IMR-90 (cell line): ENCODE measurements at regions of chr7 and their contacts with region 1.

Region 1: GRCh38 chr7:45136106-45137060 is 21.2 kb upstream of the RAMP3 start:
- DNase-seq: peak; percentile 74
- ATAC-seq: peak; percentile 89
- H3K4me3 ChIP-seq: no peak overlapping the region
- H3K27ac ChIP-seq: no peak overlapping the region
- H3K4me1 ChIP-seq: no peaks in the 10 kb centered on the region
- H3K27me3 ChIP-seq: peaks cover 25% of the 10 kb centered on the region
- CTCF ChIP-seq: peak; percentile 96
- POLR2A ChIP-seq: 0 out of 2 replicates have a peak, but pooled peaks have one; percentile 18
- RAD21 ChIP-seq: peak; percentile 95

Region 2: DNA sequence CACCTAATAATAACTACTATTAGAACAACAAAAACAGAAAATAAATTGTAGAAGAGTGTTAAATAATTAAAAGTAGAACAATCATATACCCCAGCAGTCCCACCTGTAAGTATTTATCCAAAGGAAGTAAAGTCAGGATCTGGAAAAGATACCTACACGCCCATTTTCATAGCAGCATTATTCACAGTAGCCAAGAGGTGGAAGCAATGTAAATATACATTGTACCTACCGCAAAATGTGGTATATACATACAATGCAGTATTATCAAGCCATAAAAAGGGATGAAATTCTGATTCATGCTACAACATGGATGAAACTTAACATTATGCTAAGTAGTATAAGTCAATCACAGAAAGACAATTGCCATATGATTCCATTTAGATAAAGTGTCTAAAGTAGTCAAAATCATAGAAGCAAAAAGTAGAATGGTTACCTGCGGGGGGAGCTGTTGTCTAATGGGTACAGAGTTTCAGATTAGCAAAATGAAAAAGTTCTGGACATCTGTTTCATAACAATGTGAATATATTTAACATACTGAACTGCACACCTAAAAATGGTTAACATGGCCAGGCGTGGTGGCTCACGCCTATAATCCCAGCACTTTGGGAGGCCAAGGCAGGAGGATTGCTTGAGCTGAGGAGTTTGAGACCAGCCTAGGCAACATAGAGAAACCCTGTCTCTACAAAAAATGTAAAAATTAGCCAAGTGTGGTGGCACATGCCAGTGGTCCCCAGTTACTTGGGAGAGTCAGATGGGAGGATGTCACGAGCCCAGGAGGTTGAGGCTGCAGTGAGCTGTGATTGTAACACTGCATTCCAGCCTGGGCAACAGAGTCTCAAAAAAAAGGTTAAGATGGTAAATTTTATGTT is 548.3 kb before region 1 on chr7:
- CTCF ChIA-PET with region 1: no interaction called
- POLR2A ChIA-PET with region 1: no interaction called
- dilution Hi-C with region 1: no loop called
- in situ Hi-C with region 1: loop called (anchors 10 kb)
- intact Hi-C with region 1: loop called (anchors 1 kb)
- DNase-seq: peak; percentile 66
- ATAC-seq: peak; percentile 92
- H3K4me3 ChIP-seq: no peak overlapping the region
- H3K27ac ChIP-seq: no peak overlapping the region
- H3K4me1 ChIP-seq: peaks cover 2% of the 10 kb centered on the region; the same call in 1 of the 2 replicates
- H3K27me3 ChIP-seq: no peaks in the 10 kb centered on the region
- CTCF ChIP-seq: peak; percentile 84
- POLR2A ChIP-seq: no peak
- RAD21 ChIP-seq: peak; percentile 91

Region 3: DNA sequence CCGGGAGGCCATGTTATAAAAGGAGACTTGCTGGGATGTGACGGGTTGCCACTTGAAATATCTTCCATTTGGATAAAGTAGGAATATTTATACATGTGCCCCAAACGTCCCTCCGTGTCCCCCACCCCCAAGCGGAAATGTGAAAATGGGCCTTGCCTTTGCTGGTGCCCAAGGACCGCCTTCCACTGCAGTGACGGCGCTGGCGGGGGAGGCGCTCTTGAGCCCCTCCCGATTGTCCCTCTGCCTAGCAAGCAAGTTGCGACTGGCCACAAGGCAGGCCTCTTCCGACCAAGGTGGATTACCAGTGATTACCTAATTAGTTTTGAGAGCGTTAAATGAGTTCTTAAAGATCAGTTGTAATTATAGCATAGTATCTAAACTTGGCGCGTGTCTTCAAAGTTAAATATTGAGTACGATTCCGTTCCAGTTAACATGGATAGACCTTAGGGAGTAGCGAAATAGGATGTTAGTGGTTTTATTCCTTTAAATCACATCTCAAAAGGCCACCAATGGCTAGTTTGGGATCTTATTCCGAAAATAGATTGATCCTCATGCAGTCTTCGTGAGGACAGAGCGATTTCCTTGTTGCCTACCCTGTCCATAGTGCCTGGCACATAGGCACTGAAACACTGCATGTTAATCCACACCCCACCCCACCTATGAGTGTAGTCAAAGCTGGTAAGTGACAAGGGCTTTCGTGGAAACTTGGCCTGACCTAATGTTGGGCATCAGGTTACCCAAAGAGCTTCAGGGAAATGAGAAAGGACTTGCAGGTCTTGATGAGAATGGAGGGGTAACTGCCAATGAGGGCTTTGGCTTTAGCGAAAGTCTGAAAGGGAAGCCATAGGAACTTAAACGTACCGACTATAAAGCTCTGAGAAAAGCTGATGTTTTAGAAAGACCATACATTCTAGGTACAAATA is 338.8 kb before region 1 on chr7:
- CTCF ChIA-PET with region 1: no interaction called
- POLR2A ChIA-PET with region 1: no interaction called
- dilution Hi-C with region 1: no loop called
- in situ Hi-C with region 1: no loop called
- intact Hi-C with region 1: loop called (anchors 5 kb)
- DNase-seq: peak; percentile 84
- ATAC-seq: peak; percentile 61
- H3K4me3 ChIP-seq: peak overlapping the region; percentile 91
- H3K27ac ChIP-seq: peak overlapping the region; percentile 97
- H3K4me1 ChIP-seq: peaks cover 2% of the 10 kb centered on the region; the same call in 1 of the 2 replicates
- H3K27me3 ChIP-seq: no peaks in the 10 kb centered on the region
- CTCF ChIP-seq: peak; percentile 42
- POLR2A ChIP-seq: peak; percentile 77
- RAD21 ChIP-seq: peak; percentile 38

Region 4: GRCh38 chr7:44962483-44963251 is 173.7 kb before region 1 on chr7:
- CTCF ChIA-PET with region 1: no interaction called
- POLR2A ChIA-PET with region 1: no interaction called
- dilution Hi-C with region 1: no loop called
- in situ Hi-C with region 1: loop called (anchors 10 kb)
- intact Hi-C with region 1: loop called (anchors 1 kb)
- DNase-seq: no peak
- ATAC-seq: peak; percentile 85
- H3K4me3 ChIP-seq: peak overlapping the region; percentile 34
- H3K27ac ChIP-seq: no peak overlapping the region
- H3K4me1 ChIP-seq: peaks cover 5% of the 10 kb centered on the region; the same call in 1 of the 2 replicates
- H3K27me3 ChIP-seq: peaks cover 28% of the 10 kb centered on the region
- CTCF ChIP-seq: no peak
- POLR2A ChIP-seq: no peak
- RAD21 ChIP-seq: no peak; the same call in 1 of the 2 replicates

Region 5: GRCh38 chr7:44973610-44974401 is 162.6 kb before region 1 on chr7:
- CTCF ChIA-PET with region 1: interaction called, 31 read pairs
- POLR2A ChIA-PET with region 1: no interaction called
- dilution Hi-C with region 1: no loop called
- in situ Hi-C with region 1: loop called (anchors 10 kb)
- intact Hi-C with region 1: loop called (anchors 2 kb)
- DNase-seq: no peak
- ATAC-seq: peak; percentile 69
- H3K4me3 ChIP-seq: no peak overlapping the region
- H3K27ac ChIP-seq: no peak overlapping the region
- H3K4me1 ChIP-seq: no peaks in the 10 kb centered on the region
- H3K27me3 ChIP-seq: peaks cover 7% of the 10 kb centered on the region; the same call in 1 of the 2 replicates
- CTCF ChIP-seq: peak; percentile 46
- POLR2A ChIP-seq: no peak
- RAD21 ChIP-seq: peak; percentile 60